A549 (cell line): ENCODE measurements at regions of chr20 and their contacts with region 1.

Region 1: DNA sequence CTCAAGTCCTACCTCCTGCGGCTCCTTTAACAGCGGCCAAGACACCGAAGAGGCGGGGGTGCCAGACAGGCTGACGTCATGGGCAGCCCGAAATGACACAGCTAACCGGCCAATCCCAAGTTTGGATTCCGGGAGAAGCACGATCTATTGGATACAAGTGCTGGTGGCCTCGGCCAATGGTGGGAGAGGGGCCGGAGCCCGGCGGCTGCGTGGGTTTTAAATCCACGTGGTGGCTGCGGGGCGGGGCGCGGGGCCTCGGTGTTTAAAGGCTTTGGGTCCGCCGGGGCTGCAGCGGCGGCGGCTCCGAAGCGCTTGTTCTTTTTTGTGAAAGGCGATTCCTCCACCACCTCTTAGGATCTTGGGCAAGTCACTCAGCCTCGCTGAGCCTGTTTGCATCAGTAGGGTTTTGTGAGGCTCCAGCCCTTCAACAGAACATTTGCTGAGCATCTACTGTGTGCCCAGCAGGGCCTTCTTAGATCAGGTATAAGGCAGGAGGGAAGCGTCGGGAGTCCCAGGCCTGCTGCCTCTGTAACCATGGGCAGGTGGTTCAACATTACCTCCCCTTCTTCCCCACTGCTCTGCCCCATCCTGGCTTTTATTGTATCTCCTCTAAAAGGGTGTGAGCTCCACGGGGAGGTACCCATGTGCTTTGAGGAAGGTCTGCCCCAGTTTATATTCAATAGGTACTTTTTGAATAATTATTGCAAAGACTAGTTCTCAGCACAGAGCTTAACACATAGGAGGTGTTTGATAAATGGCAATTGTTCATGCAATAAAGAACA is 8.9 kb upstream of the PMEPA1 start:
- DNase-seq: peak; percentile 98 to 99
- ATAC-seq: peak; percentile 89 to 92
- H3K4me3 ChIP-seq: peak overlapping the region; percentile 57
- H3K27ac ChIP-seq: peak overlapping the region; percentile 97 to 98
- H3K4me1 ChIP-seq: peaks cover 54% of the 10 kb centered on the region
- CTCF ChIP-seq: no peak
- EP300 ChIP-seq: no peak
- POLR2A ChIP-seq: peak; percentile 47; the same call in 1 of the 2 replicates
- RAD21 ChIP-seq: peak; percentile 8 to 32; a peak in 1 of 5 replicates

Region 2: DNA sequence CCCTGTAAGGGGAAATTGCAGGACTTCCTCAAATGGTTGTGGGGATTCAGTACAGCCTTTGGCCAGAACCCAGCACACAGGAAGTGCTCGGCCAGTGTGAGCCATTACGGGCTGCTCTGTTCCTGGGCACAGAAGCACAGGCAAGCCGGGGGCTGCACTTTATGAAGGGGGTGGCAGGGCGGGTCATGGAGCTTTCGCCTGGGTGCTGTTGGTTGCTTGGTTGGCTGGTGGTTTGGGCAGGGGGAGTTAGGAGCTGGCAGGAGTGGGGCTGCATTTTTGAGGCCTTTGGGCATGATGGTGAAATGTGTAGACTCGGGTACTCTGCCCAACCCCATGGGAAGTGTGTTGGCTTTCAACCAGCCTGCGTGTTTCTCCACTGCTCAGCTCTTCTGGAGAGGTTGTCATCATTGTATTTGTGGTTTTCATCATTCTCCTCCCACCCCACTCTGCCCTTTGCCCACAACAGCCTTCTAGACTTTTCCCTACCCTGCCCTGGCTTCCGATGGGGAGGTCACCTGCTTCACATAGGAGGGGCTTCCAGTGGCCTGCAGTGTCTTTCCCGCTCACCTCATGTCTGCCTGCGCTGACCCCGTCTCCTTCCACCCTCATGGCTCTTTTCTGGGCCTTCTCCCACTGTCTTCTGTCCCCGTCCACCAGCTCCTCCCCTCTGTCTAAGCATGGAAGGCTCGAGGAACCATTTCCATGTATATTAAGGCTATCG is 343.6 kb before region 1 on chr20:
- CTCF ChIA-PET with region 1: no interaction called
- POLR2A ChIA-PET with region 1: no interaction called
- DNase-seq: no peak
- ATAC-seq: 0 out of 6 replicates have a peak, but pooled peaks of 1 of the 2 experiments have one; percentile 5
- H3K4me3 ChIP-seq: no peak overlapping the region
- H3K27ac ChIP-seq: no peak overlapping the region
- H3K4me1 ChIP-seq: no peaks in the 10 kb centered on the region
- CTCF ChIP-seq: no peak
- EP300 ChIP-seq: no peak
- POLR2A ChIP-seq: no peak
- RAD21 ChIP-seq: no peak

Region 3: GRCh38 chr20:57698117-57698866 is 20.4 kb before region 1 on chr20:
- CTCF ChIA-PET with region 1: interaction called, 6 read pairs
- POLR2A ChIA-PET with region 1: interaction called, 13 read pairs
- DNase-seq: peak; percentile 95 to 99
- ATAC-seq: peak; percentile 77 to 83
- H3K4me3 ChIP-seq: peak overlapping the region; percentile 29
- H3K27ac ChIP-seq: peak overlapping the region; percentile 92 to 97
- H3K4me1 ChIP-seq: peaks cover 95% of the 10 kb centered on the region
- CTCF ChIP-seq: no peak
- EP300 ChIP-seq: peak; percentile 94 to 95; a peak in 4 of 5 replicates
- POLR2A ChIP-seq: no peak
- RAD21 ChIP-seq: peak in 1 of 2 experiments; percentile 44; a peak in 1 of 5 replicates

Region 4: GRCh38 chr20:57738481-57738880 is 19.8 kb after region 1 on chr20:
- CTCF ChIA-PET with region 1: interaction called, 17 read pairs
- POLR2A ChIA-PET with region 1: interaction called, 6 read pairs
- DNase-seq: peak; percentile 44 to 59
- ATAC-seq: peak; percentile 48 to 61; a peak in 4 of 6 replicates
- H3K4me3 ChIP-seq: no peak overlapping the region
- H3K27ac ChIP-seq: peak overlapping the region; percentile 50 to 70; a peak in 5 of 6 replicates
- H3K4me1 ChIP-seq: peaks cover 38% of the 10 kb centered on the region
- CTCF ChIP-seq: no peak
- EP300 ChIP-seq: no peak
- POLR2A ChIP-seq: no peak
- RAD21 ChIP-seq: no peak

Region 5: GRCh38 chr20:57748601-57749130 is 30.0 kb after region 1 on chr20:
- CTCF ChIA-PET with region 1: interaction called, 5 read pairs
- POLR2A ChIA-PET with region 1: interaction called, 11 read pairs
- DNase-seq: peak; percentile 96 to 97
- ATAC-seq: peak; percentile 94
- H3K4me3 ChIP-seq: peak overlapping the region; percentile 24
- H3K27ac ChIP-seq: peak overlapping the region; percentile 98
- H3K4me1 ChIP-seq: peaks cover 54% of the 10 kb centered on the region
- CTCF ChIP-seq: 0 out of 3 replicates have a peak, but pooled peaks have one; percentile 7
- EP300 ChIP-seq: peak; percentile 85 to 92
- POLR2A ChIP-seq: no peak
- RAD21 ChIP-seq: peak; percentile 33 to 67; a peak in 4 of 5 replicates

Region 6: GRCh38 chr20:57779461-57779886 is 60.8 kb after region 1 on chr20:
- CTCF ChIA-PET with region 1: no interaction called
- POLR2A ChIA-PET with region 1: no interaction called
- DNase-seq: peak in 1 of 2 experiments; percentile 57
- ATAC-seq: peak in 1 of 2 experiments; percentile 67; a peak in 3 of 6 replicates
- H3K4me3 ChIP-seq: no peak overlapping the region
- H3K27ac ChIP-seq: peak overlapping the region; percentile 47 to 62; a peak in 5 of 6 replicates
- H3K4me1 ChIP-seq: peaks cover 20% of the 10 kb centered on the region
- CTCF ChIP-seq: no peak
- EP300 ChIP-seq: no peak
- POLR2A ChIP-seq: no peak
- RAD21 ChIP-seq: no peak

Region 7: DNA sequence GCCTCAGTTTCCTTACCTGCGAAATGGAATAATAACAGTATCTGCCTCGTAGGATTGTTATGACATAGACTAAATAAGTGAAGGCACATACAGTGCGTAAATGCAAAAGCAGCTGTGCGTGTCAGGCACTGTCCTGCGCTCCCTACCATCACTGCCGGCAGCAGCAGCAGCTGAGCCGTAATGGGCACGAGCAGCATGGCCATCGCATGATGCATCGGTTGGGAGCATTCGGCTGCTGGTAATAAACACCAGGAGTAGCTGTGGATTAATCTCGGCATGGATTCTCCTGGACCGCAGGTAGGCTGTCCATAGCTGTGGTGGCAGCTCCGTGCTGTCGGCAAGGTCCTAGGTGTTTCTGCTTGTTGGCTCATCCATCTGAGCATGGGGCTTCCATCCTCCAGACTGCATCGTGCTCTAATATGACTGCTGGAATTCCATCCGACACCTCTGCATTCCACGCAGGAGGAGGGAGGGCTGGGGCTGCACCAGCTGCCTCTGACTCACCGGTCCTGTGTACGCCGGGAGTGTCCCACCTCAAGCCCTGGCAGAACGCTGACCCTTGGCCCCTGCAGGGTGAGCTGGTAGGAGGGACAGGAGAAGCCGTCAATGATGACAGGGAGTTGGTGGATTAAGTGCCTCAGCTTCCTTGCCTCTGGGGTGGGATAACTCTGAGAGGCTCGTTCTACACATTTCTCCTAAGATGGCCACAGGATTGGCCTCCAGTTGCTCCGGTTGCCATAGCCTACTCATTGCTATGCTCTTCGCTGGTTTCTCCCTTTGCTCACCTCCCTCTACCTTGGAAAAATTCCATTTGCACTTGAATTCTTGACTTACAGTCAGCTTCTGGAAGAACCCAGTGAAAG is 92.1 kb after region 1 on chr20:
- CTCF ChIA-PET with region 1: no interaction called
- POLR2A ChIA-PET with region 1: no interaction called
- DNase-seq: peak in 1 of 2 experiments; percentile 60
- ATAC-seq: peak; percentile 70 to 73
- H3K4me3 ChIP-seq: no peak overlapping the region
- H3K27ac ChIP-seq: peak overlapping the region; percentile 51 to 59
- H3K4me1 ChIP-seq: peaks cover 24% of the 10 kb centered on the region
- CTCF ChIP-seq: no peak
- EP300 ChIP-seq: no peak
- POLR2A ChIP-seq: no peak
- RAD21 ChIP-seq: no peak